ENCODE measurements at regions of chr14 and their contacts with region 1.

Region 1: GRCh38 chr14:49852301-49853157 is at the start of gene NEMF:
- DNase-seq: peak in 1 of 2 experiments; percentile 91
- H3K4me3 ChIP-seq: peak within 1 kb of the TSS; percentile 85 to 96 (median 95)
- H3K27ac ChIP-seq: peak within 1 kb of the TSS; percentile 78
- H3K4me1 ChIP-seq: no peaks in the 10 kb centered on the region
- H3K27me3 ChIP-seq: no peaks in the 10 kb centered on the region
- CTCF ChIP-seq: peak; percentile 53 to 70 (median 63)
- EP300 ChIP-seq: no peak
- POLR2A ChIP-seq: peak; percentile 71 to 97
- RAD21 ChIP-seq: peak in 1 of 2 experiments; percentile 22; a peak in 1 of 4 replicates
- total RNA-seq, gene NEMF: 44.5 and 45.5 TPM in 2 replicates

Region 2: GRCh38 chr14:49218436-49219092 is 634.0 kb before region 1 on chr14:
- CTCF ChIA-PET with region 1: no interaction called
- POLR2A ChIA-PET with region 1: no interaction called
- DNase-seq: no peak
- H3K4me3 ChIP-seq: no peak overlapping the region
- H3K27ac ChIP-seq: no peak overlapping the region
- H3K4me1 ChIP-seq: no peaks in the 10 kb centered on the region
- H3K27me3 ChIP-seq: no peaks in the 10 kb centered on the region
- CTCF ChIP-seq: no peak
- EP300 ChIP-seq: no peak
- POLR2A ChIP-seq: no peak
- RAD21 ChIP-seq: no peak

Region 3: GRCh38 chr14:49820176-49820575 is 32.4 kb before region 1 on chr14:
- CTCF ChIA-PET with region 1: interaction called, 14 read pairs
- POLR2A ChIA-PET with region 1: interaction called, 3 read pairs
- DNase-seq: no peak
- H3K4me3 ChIP-seq: no peak overlapping the region
- H3K27ac ChIP-seq: no peak overlapping the region
- H3K4me1 ChIP-seq: no peaks in the 10 kb centered on the region
- H3K27me3 ChIP-seq: no peaks in the 10 kb centered on the region
- CTCF ChIP-seq: no peak
- EP300 ChIP-seq: no peak
- POLR2A ChIP-seq: no peak
- RAD21 ChIP-seq: no peak

Region 4: DNA sequence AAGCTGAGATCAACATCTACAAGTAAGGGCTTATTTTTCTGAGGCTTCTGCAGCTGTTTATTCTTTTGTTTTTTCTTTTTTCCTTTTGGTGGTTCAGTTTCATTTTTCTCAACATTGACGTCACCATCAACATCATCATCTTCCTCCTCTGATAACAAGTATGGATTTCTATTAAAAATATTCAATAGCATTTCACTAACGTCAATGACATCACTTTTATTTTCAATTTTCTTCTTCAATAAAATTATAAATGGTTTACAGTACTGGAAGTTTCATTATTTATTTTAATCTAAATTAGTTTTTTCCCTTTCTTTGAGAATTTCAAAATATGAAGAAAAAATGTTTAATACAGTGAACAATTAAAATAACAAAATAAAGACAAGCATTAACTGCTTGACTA is 23.9 kb before region 1 on chr14:
- CTCF ChIA-PET with region 1: interaction called, 10 read pairs
- POLR2A ChIA-PET with region 1: interaction called, 10 read pairs
- DNase-seq: no peak
- H3K4me3 ChIP-seq: no peak overlapping the region
- H3K27ac ChIP-seq: no peak overlapping the region
- H3K4me1 ChIP-seq: no peaks in the 10 kb centered on the region
- H3K27me3 ChIP-seq: no peaks in the 10 kb centered on the region
- CTCF ChIP-seq: no peak
- EP300 ChIP-seq: no peak
- POLR2A ChIP-seq: no peak
- RAD21 ChIP-seq: no peak